ENCODE measurements at regions of chr17 and their contacts with region 1.

Region 1: GRCh38 chr17:10683853-10684252 is 13.5 kb downstream of the SCO1 start:
- DNase-seq: no peak
- ATAC-seq: no peak
- H3K4me3 ChIP-seq: no peak overlapping the region
- H3K27ac ChIP-seq: peak overlapping the region; percentile 43 to 90
- H3K4me1 ChIP-seq: peaks cover 0 to 1% of the 10 kb centered on the region in 2 donors
- H3K27me3 ChIP-seq: no peaks in the 10 kb centered on the region

Region 2: GRCh38 chr17:10668771-10669170 is 15.1 kb before region 1 on chr17:
- intact Hi-C with region 1: loop called in 1 of 2 experiments (anchors 1 kb)
- DNase-seq: no peak
- ATAC-seq: no peak
- H3K4me3 ChIP-seq: no peak overlapping the region
- H3K27ac ChIP-seq: no peak overlapping the region
- H3K4me1 ChIP-seq: no peaks in the 10 kb centered on the region
- H3K27me3 ChIP-seq: no peaks in the 10 kb centered on the region

Region 3: DNA sequence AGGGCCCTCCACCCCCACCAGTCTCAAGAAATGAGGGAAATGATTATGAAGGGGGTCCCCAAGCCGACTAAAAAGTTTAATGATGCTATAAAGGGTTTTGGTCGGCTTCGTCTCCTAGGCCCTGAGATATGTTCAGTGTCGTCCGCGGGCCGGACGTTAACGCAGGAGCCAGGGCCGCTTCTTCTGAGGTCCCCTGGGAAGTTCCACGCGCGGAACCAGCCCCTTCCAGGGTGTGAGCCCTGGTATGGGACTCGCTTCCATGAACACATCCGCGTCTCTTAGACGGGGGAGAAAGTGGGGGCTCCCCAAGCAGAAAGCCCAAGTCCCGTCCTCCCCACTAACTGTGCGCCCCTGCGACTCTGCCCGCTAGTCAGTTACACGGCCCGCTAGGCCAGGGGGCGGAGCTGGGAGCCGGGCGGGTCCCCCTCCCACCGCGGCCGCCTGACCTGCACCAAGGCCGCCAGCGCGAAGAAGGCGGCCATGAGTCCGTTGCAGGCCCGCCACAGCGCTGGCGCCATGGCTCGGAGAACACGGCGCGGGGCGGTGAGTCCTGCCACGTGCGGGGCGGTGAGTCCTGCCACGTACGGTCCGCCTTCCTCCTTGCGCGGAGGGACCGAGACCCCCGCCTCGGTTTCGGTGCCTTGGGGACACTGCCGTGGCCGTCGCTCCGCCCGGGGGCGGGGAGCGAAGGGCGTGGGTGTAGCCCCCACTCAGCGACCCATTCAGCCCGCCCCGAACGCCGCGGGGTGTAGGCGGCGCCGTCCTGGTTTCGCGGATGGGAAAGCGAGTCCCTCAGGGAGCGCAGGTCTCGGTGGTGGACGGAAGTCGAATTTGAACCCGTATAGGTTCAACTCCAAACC is 45.7 kb after region 1 on chr17 and contains the start of gene TMEM220:
- intact Hi-C with region 1: loop called in 1 of 2 experiments (anchors 10 kb)
- DNase-seq: peak; percentile 88 to 93
- ATAC-seq: peak; percentile 96
- H3K4me3 ChIP-seq: peak within 1 kb of the TSS; percentile 39 to 70
- H3K27ac ChIP-seq: peak within 1 kb of the TSS; percentile 76 to 87
- H3K4me1 ChIP-seq: no peaks in the 10 kb centered on the region
- H3K27me3 ChIP-seq: no peaks in the 10 kb centered on the region
- total RNA-seq, gene TMEM220: 15.4 to 17.4 TPM